AG04450 (cell line): ENCODE measurements at regions of chr11 and their contacts with region 1.

Region 1: GRCh38 chr11:123166071-123166559 is 28.9 kb downstream of the CLMP start:
- DNase-seq: peak; percentile 97
- H3K4me3 ChIP-seq: no peak overlapping the region
- H3K27ac ChIP-seq: peak overlapping the region; percentile 93
- H3K27me3 ChIP-seq: no peaks in the 10 kb centered on the region
- CTCF ChIP-seq: peak; percentile 72

Region 2: GRCh38 chr11:123062158-123062891 is 103.8 kb before region 1 on chr11:
- CTCF ChIA-PET with region 1: no interaction called
- POLR2A ChIA-PET with region 1: interaction called, 10 read pairs
- DNase-seq: peak; percentile 100
- H3K4me3 ChIP-seq: peak overlapping the region; percentile 95
- H3K27ac ChIP-seq: peak overlapping the region; percentile 99
- H3K27me3 ChIP-seq: no peaks in the 10 kb centered on the region
- CTCF ChIP-seq: 0 out of 2 replicates have a peak, but pooled peaks have one; percentile 13

Region 3: GRCh38 chr11:123110356-123110755 is 55.8 kb before region 1 on chr11:
- CTCF ChIA-PET with region 1: interaction called, 12 read pairs
- POLR2A ChIA-PET with region 1: no interaction called
- DNase-seq: no peak
- H3K4me3 ChIP-seq: no peak overlapping the region
- H3K27ac ChIP-seq: no peak overlapping the region
- H3K27me3 ChIP-seq: no peaks in the 10 kb centered on the region
- CTCF ChIP-seq: no peak

Region 4: DNA sequence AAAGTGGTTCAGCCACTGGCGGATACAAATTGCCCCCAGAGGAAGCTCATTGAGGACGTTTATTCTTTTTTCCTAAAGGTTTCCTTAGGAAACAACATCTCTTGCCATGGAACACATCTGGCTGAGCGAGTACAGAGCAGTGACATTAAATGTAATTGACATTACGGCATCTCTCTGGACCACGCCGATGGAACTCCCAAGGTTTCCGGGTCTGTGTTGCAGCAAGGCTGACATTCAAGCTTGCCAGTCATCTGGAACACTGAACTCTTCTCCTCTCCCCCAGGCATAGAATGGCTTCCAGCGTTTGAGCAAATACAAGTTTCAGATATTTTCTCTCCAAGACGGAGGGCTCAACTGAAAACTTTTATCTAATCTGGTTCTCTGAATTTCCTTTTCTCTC is 13.2 kb before region 1 on chr11:
- CTCF ChIA-PET with region 1: interaction called, 13 read pairs
- POLR2A ChIA-PET with region 1: interaction called, 3 read pairs
- DNase-seq: no peak
- H3K4me3 ChIP-seq: no peak overlapping the region
- H3K27ac ChIP-seq: no peak overlapping the region
- H3K27me3 ChIP-seq: no peaks in the 10 kb centered on the region
- CTCF ChIP-seq: no peak

Region 5: GRCh38 chr11:123188508-123189165 is 22.5 kb after region 1 on chr11:
- CTCF ChIA-PET with region 1: interaction called, 6 read pairs
- POLR2A ChIA-PET with region 1: interaction called, 11 read pairs
- DNase-seq: peak; percentile 91
- H3K4me3 ChIP-seq: peak overlapping the region; percentile 50
- H3K27ac ChIP-seq: peak overlapping the region; percentile 96
- H3K27me3 ChIP-seq: no peaks in the 10 kb centered on the region
- CTCF ChIP-seq: peak; percentile 27; the same call in 1 of the 2 replicates